OCI-LY7 (cell line): ENCODE measurements at regions of chr3 and their contacts with region 1.

Region 1: DNA sequence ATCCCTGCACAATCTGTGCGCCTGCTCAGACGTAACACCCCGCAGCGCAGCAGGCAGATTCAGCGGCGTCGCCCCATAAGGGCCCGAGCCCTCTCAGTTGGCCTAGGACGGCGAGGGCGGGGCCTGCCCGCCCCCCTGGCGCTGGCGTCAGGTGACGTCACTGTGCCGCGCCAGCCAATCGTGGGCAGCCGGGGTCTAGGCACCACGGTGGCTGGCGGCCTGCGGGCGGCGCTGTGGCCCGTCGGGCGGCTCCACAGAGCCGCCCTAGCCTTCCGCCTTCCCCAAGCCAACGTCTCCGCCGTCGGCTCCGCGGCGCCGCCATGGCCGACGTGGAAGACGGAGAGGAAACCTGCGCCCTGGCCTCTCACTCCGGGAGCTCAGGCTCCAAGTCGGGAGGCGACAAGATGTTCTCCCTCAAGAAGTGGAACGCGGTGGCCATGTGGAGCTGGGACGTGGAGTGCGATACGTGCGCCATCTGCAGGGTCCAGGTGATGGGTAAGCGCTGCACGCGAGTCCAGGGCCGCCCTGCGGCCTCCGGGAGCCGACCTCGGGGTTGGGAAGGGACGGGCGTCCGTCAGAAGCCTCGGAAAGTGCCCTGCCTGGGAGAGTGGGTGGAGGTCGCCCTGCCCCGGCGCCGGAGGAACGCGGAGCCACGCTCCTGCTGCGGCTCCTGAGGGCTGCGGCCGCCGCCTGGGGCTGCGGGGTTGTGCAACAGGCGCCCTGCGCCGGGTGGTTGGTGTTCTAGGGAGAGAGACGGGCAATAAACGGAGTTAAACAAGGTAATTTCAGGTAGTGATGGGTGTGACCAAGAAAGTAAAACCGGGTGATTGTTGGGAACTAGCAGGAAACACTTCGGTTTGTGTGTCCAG is at the start of gene RNF7:
- DNase-seq: peak; percentile 98
- H3K4me3 ChIP-seq: peak within 1 kb of the TSS; percentile 96
- H3K27ac ChIP-seq: peak within 1 kb of the TSS; percentile 71
- H3K4me1 ChIP-seq: peaks cover 40% of the 10 kb centered on the region
- CTCF ChIP-seq: peak; percentile 86
- total RNA-seq, gene RNF7: 36.3 and 47.3 TPM in 2 replicates

Region 2: GRCh38 chr3:141311496-141312353 is 426.5 kb before region 1 on chr3:
- CTCF ChIA-PET with region 1: no interaction called
- POLR2A ChIA-PET with region 1: no interaction called
- intact Hi-C with region 1: loop called (anchors 5 kb)
- DNase-seq: peak; percentile 98
- H3K4me3 ChIP-seq: peak overlapping the region; percentile 75
- H3K27ac ChIP-seq: no peak overlapping the region
- H3K4me1 ChIP-seq: peaks cover 9% of the 10 kb centered on the region
- CTCF ChIP-seq: peak; percentile 77

Region 3: GRCh38 chr3:141487521-141488252 is 250.6 kb before region 1 on chr3:
- CTCF ChIA-PET with region 1: no interaction called
- POLR2A ChIA-PET with region 1: no interaction called
- intact Hi-C with region 1: loop called (anchors 10 kb)
- DNase-seq: peak; percentile 94
- H3K4me3 ChIP-seq: peak overlapping the region; percentile 97
- H3K27ac ChIP-seq: peak overlapping the region; percentile 80
- H3K4me1 ChIP-seq: peaks cover 36% of the 10 kb centered on the region
- CTCF ChIP-seq: no peak

Region 4: DNA sequence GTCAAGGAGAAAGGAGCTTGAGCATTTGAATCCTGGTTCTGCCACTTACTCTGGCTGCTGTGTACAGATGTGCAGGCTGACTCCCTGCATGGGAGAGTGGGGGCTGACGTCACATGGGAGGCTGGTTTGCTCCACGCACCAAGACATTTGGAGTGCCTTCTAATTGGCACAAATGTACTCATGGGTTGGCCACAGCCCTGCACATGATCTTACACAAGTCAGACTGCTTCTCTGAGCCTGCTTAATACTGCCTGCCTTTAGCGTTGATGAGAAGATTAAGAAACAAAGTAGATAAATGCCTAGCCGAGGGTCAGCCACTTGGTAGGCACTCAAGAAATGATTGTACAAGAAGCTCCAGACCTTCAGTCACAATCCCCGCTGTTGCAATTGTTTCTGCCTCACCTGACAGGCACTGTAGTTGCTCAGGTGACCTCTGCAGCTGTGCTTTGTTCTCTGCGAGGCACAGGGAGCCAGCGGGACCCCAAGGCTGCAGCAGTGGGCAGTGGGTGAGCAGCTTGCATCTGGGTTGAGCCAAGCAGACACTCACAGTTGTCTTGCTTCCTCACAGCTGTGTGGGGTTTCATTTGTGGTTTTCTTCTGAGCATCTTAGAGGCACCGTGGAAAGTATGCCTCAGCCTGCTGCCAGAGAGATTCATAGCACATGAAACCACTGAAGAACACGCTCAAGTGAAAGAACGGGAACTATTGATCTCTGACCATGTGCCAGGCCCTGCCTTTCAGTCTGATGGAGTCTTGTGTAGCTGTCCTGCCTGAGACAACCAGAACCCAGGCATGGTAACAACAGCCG is 58.0 kb after region 1 on chr3:
- CTCF ChIA-PET with region 1: no interaction called
- POLR2A ChIA-PET with region 1: no interaction called
- intact Hi-C with region 1: no loop called
- DNase-seq: peak; percentile 79
- H3K4me3 ChIP-seq: no peak overlapping the region
- H3K27ac ChIP-seq: peak overlapping the region; percentile 26
- H3K4me1 ChIP-seq: peaks cover 22% of the 10 kb centered on the region
- CTCF ChIP-seq: no peak

Region 5: GRCh38 chr3:141913150-141913811 is 175.0 kb after region 1 on chr3:
- CTCF ChIA-PET with region 1: no interaction called
- POLR2A ChIA-PET with region 1: interaction called, 6 read pairs
- intact Hi-C with region 1: loop called (anchors 1 kb)
- DNase-seq: peak; percentile 72
- H3K4me3 ChIP-seq: no peak overlapping the region
- H3K27ac ChIP-seq: no peak overlapping the region
- H3K4me1 ChIP-seq: no peaks in the 10 kb centered on the region
- CTCF ChIP-seq: peak; percentile 87

Region 6: DNA sequence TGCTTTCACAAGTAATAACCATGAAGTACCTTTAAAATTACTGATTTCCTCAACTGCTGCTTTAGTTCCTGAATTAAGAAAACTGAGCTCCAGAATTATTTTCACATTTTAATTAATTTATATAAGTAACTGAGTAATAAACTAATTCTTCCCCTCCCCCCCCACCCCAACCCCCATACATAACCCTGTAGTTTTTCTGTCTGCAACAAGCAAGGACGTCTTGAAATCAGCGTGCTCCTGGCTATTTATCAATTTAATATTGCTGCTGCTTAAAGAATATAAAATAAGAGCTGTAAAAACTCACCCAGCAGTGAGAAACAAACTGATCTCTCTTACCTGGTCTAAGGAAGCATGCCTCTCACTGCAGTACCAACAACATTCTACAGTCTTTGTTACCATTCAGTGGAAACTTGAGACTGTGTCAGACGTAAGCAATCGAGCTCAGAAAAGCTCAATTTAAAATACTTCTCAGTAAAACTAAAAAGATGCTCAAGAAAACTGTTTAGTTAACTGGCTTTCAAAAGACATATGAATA is 290.1 kb after region 1 on chr3:
- CTCF ChIA-PET with region 1: no interaction called
- POLR2A ChIA-PET with region 1: no interaction called
- intact Hi-C with region 1: loop called (anchors 2 kb)
- DNase-seq: peak; percentile 92
- H3K4me3 ChIP-seq: peak overlapping the region; percentile 84
- H3K27ac ChIP-seq: peak overlapping the region; percentile 80
- H3K4me1 ChIP-seq: peaks cover 57% of the 10 kb centered on the region
- CTCF ChIP-seq: no peak

Region 7: DNA sequence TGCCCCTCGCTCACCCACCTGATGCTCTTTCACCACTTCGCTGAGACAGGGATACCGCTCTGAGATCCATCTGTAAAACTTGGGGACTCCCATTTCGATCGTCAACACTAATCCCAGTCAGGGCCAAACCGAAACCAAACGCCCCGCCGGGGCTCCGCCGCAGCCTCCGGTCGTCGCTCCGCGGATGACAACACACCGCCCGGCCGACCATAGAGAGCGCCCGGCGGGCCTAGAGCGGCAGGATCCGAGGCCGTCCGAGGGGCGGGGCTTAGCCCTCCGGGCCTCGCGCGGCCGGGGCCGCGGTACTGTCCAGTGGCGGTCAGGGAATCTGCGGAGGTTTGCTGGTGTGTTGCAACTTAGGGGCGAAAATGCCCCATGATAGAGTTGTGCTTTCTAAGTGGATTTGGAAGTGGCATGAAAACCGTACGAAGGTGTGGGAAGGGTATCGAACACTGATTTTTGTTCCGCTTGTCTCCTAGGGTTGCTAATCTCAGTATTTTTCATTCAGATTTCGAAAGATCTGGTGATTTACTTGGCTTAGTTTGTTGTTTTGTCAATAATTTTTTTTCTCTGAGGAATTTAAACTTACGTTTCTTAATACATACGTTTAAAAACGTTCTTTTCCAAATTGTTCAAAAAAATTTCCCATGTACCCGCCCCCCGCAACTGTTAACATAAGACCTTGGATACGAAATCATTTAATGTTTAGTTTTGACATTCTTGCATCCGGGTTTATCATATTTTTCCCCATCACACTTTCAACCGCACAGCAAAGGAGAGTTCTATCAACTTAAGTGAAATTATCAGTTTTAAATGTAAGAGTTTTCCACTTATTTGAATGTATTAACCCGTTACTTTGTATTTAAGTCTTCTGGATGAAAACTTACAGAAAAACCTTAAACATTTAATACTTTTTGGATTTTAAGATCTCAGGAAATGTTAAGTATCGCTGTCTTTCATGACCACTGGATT is 709.9 kb after region 1 on chr3 and contains the start of gene XRN1:
- CTCF ChIA-PET with region 1: no interaction called
- POLR2A ChIA-PET with region 1: no interaction called
- intact Hi-C with region 1: loop called (anchors 5 kb)
- DNase-seq: peak; percentile 93
- H3K4me3 ChIP-seq: peak within 1 kb of the TSS; percentile 87
- H3K27ac ChIP-seq: peak within 1 kb of the TSS; percentile 65
- H3K4me1 ChIP-seq: peaks cover 24% of the 10 kb centered on the region
- CTCF ChIP-seq: no peak
- total RNA-seq, gene XRN1: 33.1 and 43.6 TPM in 2 replicates